SK-N-SH (cell line): ENCODE measurements at regions of chr5 and their contacts with region 1.

Region 1: GRCh38 chr5:115194676-115195075 is 25.0 kb upstream of the TRIM36 start:
- DNase-seq: peak; percentile 67
- H3K4me3 ChIP-seq: no peak overlapping the region
- H3K27ac ChIP-seq: peak overlapping the region in 1 of 2 experiments; percentile 74; a peak in 2 of 4 replicates
- H3K4me1 ChIP-seq: peaks cover 0 to 17% of the 10 kb centered on the region in 2 experiments; a peak in 2 of 4 replicates
- H3K27me3 ChIP-seq: no peaks in the 10 kb centered on the region
- CTCF ChIP-seq: no peak
- EP300 ChIP-seq: peak in 1 of 2 experiments; percentile 94; a peak in 2 of 4 replicates
- RAD21 ChIP-seq: no peak

Region 2: DNA sequence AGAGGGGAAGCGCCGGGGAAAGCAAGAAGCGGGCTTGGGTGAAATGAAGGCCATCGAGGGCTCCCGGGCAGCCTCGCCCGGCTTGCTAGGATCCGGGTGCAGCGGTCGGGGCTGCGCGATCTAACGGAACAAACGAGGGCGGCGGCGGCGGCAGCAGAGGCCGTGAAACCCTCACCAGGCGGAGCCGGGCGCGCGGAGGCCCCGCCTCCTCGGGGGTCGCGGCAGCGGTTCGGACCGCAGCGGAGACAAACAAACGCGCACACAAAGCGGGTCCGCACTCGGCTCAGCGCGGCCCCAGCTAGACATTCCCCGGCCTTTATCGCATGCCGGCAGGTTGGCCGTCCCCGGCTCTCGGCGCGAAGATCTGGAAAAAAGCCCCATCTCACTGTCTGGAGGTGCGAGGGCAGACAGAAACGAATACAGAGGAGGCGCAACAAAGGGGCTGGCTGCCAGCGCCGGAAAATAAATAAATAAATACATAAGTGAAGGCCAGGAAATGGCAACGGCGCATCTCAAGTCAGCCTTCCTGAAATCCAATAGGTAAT is 14.4 kb before region 1 on chr5:
- CTCF ChIA-PET with region 1: interaction called, 11 read pairs
- POLR2A ChIA-PET with region 1: interaction called, 5 read pairs
- DNase-seq: peak; percentile 94
- H3K4me3 ChIP-seq: peak overlapping the region; percentile 53 to 66
- H3K27ac ChIP-seq: peak overlapping the region in 1 of 2 experiments; percentile 83; a peak in 2 of 4 replicates
- H3K4me1 ChIP-seq: peaks cover 0 to 2% of the 10 kb centered on the region in 2 experiments; a peak in 1 of 4 replicates
- H3K27me3 ChIP-seq: peaks cover 32% of the 10 kb centered on the region
- CTCF ChIP-seq: no peak
- EP300 ChIP-seq: no peak
- RAD21 ChIP-seq: no peak